ENCODE measurements at regions of chr14 and their contacts with region 1.

Region 1: DNA sequence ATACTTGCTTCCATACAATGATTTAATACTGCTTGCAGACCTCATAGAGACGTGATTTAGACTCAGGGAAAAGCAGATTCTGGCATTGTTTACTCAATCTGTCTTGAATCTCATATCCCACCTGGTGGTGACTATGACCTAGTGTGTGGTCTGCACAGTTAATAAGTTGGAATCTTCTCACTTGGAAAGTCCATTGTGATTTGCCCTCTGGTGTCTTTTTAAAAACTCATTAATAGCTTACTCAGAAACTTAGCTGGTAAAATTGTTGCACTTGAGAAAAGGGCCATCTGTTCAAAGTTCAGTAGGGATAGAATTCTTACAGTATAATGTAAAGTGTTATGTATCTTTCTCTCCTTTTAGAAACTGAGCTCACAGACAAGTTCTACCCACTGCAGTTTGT is 106.0 kb downstream of the PELI2 start:
- DNase-seq: peak in 1 of 3 donors; percentile 21
- H3K4me3 ChIP-seq: no peak overlapping the region
- H3K27ac ChIP-seq: no peak overlapping the region
- H3K4me1 ChIP-seq: peaks cover 8 to 37% (median 21%) of the 10 kb centered on the region in 4 experiments
- H3K27me3 ChIP-seq: no peaks in the 10 kb centered on the region

Region 2: GRCh38 chr14:55684956-55685584 is 539.2 kb before region 1 on chr14:
- CTCF ChIA-PET with region 1: no interaction called
- POLR2A ChIA-PET with region 1: no interaction called
- DNase-seq: no peak
- H3K4me3 ChIP-seq: no peak overlapping the region
- H3K27ac ChIP-seq: no peak overlapping the region
- H3K4me1 ChIP-seq: no peaks in the 10 kb centered on the region
- H3K27me3 ChIP-seq: no peaks in the 10 kb centered on the region

Region 3: GRCh38 chr14:56212521-56212920 is 11.7 kb before region 1 on chr14:
- CTCF ChIA-PET with region 1: interaction called, 12 read pairs
- POLR2A ChIA-PET with region 1: no interaction called
- DNase-seq: no peak
- H3K4me3 ChIP-seq: no peak overlapping the region
- H3K27ac ChIP-seq: no peak overlapping the region
- H3K4me1 ChIP-seq: peaks cover 12 to 41% (median 24%) of the 10 kb centered on the region in 4 experiments
- H3K27me3 ChIP-seq: no peaks in the 10 kb centered on the region

Measured in common myeloid progenitor, CD34-positive (primary cell).